Activated naive CD4-positive, alpha-beta T cell treated with anti-CD3 and anti-CD28 coated beads for 36 hours (primary cell): ENCODE measurements at regions of chr1 and their contacts with region 1.

Region 1: DNA sequence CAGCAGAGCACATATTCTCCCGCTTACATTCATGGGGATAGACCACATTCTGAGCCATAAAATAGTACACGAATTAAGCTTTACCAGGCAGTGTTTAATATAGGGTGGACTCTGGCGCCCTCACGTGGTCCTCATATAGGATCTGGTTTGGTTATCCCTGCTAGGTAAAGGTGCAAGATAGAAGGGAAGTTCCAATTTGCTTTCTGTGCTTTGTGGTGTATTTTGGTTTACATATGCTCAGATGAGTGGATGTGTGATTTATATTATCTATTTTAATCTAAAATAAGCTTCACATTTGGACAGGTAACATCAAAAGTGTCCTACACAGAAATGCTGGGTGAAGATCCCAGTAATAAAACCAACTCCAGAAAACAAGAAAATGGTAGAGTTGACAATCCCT is 3.6 kb downstream of the CR1 start:
- DNase-seq: peak; percentile 88
- H3K4me3 Mint-ChIP-seq: no peak overlapping the region
- H3K27ac Mint-ChIP-seq: peak overlapping the region; percentile 51
- H3K4me1 Mint-ChIP-seq: peaks cover 26% of the 10 kb centered on the region
- H3K27me3 Mint-ChIP-seq: peaks cover 25% of the 10 kb centered on the region

Region 2: DNA sequence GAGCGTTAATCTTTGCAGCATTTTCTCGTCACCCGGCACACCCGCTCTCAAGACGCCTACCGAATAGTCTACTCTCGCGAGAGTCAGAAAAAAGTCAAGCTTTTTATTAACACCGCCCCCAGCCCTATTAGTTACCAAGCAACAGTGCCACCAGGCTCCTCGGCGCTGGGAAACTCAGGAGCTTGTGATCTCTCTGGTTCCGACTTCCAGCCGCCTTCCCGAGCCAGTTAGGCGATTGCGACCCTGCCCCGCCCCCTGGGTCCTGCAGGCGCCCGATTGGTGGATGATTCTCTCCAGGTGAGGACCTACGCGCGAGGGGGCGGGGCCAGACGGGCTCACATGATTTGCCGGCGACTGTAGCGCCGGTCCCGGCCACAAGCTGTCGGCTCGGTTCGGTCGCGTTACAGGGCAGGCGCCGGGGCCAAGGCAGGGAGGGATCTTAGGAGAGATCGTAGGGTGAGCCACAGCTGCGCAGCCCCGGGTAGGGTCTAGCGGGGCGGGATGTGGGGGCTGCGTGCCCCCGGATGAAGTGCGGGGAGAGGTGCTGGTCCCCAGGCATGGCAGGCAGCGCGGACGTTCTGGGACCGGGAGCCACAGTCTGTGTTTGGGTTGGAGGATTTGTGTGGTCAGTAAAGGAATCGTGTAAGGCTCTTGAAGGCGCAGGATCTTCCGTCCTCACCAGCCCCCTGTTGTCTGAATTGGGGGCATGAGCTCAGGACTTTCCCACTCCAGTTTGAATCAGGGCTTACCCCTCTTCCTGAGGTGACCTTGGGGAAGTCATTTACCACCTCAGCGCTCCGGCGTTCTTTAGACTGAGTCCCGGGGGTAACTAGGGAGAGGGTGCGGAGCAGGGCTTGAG is 446.4 kb before region 1 on chr1 and contains the start of gene PFKFB2:
- CTCF ChIA-PET with region 1: interaction called, 5 read pairs
- intact Hi-C with region 1: loop called (anchors 1 kb)
- DNase-seq: peak; percentile 97
- H3K4me3 Mint-ChIP-seq: peak within 1 kb of the TSS; percentile 97
- H3K27ac Mint-ChIP-seq: peak within 1 kb of the TSS; percentile 68
- H3K4me1 Mint-ChIP-seq: peaks cover 36% of the 10 kb centered on the region
- H3K27me3 Mint-ChIP-seq: no peaks in the 10 kb centered on the region
- total RNA-seq, gene PFKFB2: 3.4 to 6.2 TPM

Region 3: GRCh38 chr1:207181838-207182237 is 317.7 kb before region 1 on chr1:
- CTCF ChIA-PET with region 1: no interaction called
- intact Hi-C with region 1: loop called (anchors 1 kb)
- DNase-seq: no peak
- H3K4me3 Mint-ChIP-seq: no peak overlapping the region
- H3K27ac Mint-ChIP-seq: no peak overlapping the region
- H3K4me1 Mint-ChIP-seq: no peaks in the 10 kb centered on the region
- H3K27me3 Mint-ChIP-seq: no peaks in the 10 kb centered on the region

Region 4: GRCh38 chr1:207355060-207355459 is 144.5 kb before region 1 on chr1:
- CTCF ChIA-PET with region 1: no interaction called
- intact Hi-C with region 1: no loop called
- DNase-seq: no peak
- H3K4me3 Mint-ChIP-seq: no peak overlapping the region
- H3K27ac Mint-ChIP-seq: no peak overlapping the region
- H3K4me1 Mint-ChIP-seq: peaks cover 55% of the 10 kb centered on the region
- H3K27me3 Mint-ChIP-seq: no peaks in the 10 kb centered on the region

Region 5: GRCh38 chr1:207404849-207405525 is 94.6 kb before region 1 on chr1:
- CTCF ChIA-PET with region 1: interaction called, 16 read pairs
- intact Hi-C with region 1: loop called (anchors 1 kb)
- DNase-seq: no peak
- H3K4me3 Mint-ChIP-seq: no peak overlapping the region
- H3K27ac Mint-ChIP-seq: no peak overlapping the region
- H3K4me1 Mint-ChIP-seq: peaks cover 13% of the 10 kb centered on the region
- H3K27me3 Mint-ChIP-seq: no peaks in the 10 kb centered on the region

Region 6: DNA sequence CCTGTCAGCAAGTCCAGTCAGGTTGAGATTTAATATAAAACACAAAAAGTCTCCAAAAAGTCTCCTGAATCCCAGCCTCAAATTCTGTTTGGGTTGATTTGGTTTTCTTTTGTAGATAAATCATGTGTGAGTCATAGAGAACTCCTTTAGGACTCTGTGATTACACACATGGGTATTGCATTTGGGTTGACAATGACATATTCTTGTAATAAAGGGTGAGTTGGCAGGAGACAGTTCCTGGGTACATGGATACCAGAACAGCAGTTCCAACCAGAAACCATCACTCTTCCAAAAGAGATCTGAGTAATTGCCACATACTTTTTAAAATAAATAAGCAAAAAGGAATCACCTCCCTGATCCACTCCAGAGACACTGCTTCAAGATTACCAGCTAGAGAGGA is 36.6 kb before region 1 on chr1:
- CTCF ChIA-PET with region 1: interaction called, 4 read pairs
- intact Hi-C with region 1: loop called (anchors 1 kb)
- DNase-seq: no peak
- H3K4me3 Mint-ChIP-seq: no peak overlapping the region
- H3K27ac Mint-ChIP-seq: no peak overlapping the region
- H3K4me1 Mint-ChIP-seq: peaks cover 42% of the 10 kb centered on the region
- H3K27me3 Mint-ChIP-seq: no peaks in the 10 kb centered on the region

Region 7: DNA sequence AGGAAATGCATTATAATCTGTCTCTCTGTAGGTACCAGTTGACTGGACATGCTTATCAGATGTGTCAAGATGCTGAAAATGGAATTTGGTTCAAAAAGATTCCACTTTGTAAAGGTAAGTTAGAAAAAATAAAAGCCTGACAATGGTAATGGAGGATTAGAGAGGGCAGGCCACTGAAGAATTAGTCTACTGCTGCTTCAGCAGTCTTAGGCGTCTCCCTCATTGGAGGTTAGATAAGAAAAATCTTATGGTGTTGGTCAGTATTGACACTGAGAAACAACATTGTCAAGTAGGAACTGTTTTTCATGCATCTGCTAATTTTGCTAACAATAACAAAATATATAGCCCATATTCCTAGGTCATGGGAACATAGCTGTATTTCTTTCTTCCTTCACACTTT is 25.4 kb before region 1 on chr1:
- CTCF ChIA-PET with region 1: no interaction called
- intact Hi-C with region 1: no loop called
- DNase-seq: no peak
- H3K4me3 Mint-ChIP-seq: no peak overlapping the region
- H3K27ac Mint-ChIP-seq: no peak overlapping the region
- H3K4me1 Mint-ChIP-seq: peaks cover 8% of the 10 kb centered on the region
- H3K27me3 Mint-ChIP-seq: no peaks in the 10 kb centered on the region